Sciatic nerve (tissue), 2 donors: ENCODE measurements at regions of chr3 and their contacts with region 1.

Region 1: DNA sequence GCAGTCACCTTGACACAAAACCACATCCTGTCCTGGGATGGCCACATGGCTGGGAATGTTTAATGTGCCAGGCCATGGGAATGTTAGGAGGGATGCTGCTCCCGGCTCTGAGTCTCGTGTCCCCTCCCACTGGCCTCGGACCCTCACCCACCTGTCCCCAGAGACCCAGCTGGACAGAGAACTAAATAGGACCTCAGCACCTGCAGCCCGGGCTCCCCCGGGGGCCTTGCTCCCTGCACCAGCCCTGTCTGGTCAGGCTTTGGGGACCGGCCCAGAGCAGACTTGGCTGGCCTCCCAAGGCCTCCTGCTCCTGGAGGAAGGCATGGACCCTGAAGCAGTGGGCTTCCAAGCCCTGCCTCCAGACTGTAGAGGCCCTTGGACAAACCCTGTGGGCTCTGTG is 100.0 kb upstream of the IQSEC1 start:
- DNase-seq: no peak
- ATAC-seq: no peak

Region 2: DNA sequence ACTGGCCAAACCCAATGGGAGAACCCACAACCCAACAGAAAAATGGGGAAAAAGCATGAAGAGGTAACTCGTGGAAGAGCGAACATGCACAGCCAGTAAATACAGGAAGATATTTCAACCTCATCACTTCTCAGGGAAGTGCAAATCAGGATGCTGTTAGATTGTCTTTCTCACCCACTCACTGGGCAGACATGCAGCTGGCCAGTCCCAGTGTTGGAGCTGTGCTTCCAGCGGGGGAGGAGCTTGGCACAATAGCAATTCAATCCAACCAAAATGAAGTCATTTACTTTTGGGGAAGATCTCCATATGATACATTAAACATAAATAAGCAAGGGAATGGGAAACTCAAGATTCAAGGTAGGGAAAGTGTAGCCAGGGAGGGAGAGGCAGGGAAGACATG is 694.5 kb after region 1 on chr3:
- intact Hi-C with region 1: loop called (anchors 2 kb)
- DNase-seq: no peak
- ATAC-seq: no peak